ENCODE measurements at regions of chr18 and their contacts with region 1.

Region 1: DNA sequence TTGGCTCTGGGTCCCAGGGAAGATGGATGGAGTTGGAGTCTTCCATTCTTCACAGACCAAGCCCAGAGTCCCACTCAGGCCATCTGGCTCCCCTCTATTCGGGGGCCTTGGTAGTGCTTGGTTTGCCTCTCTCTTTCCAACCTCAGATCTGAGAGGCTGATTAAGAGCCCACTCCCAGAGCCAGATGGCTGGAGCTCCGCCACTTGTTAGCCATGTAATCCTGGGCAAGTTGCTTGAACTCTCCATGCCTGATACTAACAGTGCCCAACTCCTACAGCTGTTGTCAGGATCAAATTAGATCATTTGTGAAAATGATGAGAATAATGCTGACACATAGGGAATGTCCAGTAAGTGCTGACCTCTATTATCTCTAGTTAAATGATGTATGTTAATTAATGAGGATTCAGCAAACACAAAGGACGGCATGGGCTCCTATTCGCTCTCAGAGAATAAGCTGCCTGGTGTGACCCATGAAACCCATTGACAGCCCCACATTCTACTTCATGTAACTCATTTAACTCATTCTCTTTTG is 46.6 kb upstream of the SLC14A1 start:
- DNase-seq: no peak
- H3K4me3 ChIP-seq: no peak overlapping the region
- CTCF ChIP-seq: no peak

Region 2: DNA sequence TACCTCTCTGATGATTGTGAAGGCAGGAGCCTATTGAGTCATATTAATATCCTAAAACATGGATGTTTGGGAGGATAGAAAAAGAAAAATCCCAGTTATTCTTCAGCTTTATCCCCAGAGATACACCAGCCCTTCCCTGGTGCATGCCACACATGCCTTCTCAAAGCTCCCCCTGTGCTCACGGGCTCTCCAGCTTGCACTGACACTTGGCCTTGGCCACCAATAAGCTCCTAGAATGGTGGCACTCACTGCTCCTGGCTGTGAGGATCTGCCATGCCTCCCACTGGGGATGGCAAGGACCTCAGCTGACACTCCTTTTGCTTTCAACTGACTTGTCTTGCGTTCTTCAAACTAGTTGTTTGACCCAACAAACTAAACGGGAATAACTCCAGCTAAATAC is 62.5 kb after region 1 on chr18:
- in situ Hi-C with region 1: loop called (anchors 5 kb)
- DNase-seq: no peak
- H3K4me3 ChIP-seq: no peak overlapping the region
- CTCF ChIP-seq: no peak

Region 3: GRCh38 chr18:45900623-45901022 is 223.3 kb after region 1 on chr18:
- in situ Hi-C with region 1: loop called (anchors 5 kb)
- DNase-seq: no peak
- H3K4me3 ChIP-seq: no peak overlapping the region
- CTCF ChIP-seq: no peak

Measured in astrocyte of the cerebellum (primary cell).